HAP-1 (cell line): ENCODE measurements at regions of chr1 and their contacts with region 1.

Region 1: GRCh38 chr1:150168960-150169601 is 19.4 kb downstream of the PLEKHO1 start:
- DNase-seq: peak; percentile 51 to 82
- H3K4me3 ChIP-seq: no peak overlapping the region
- H3K4me1 ChIP-seq: peaks cover 2% of the 10 kb centered on the region; the same call in 1 of the 2 replicates
- H3K27me3 ChIP-seq: no peaks in the 10 kb centered on the region

Region 2: GRCh38 chr1:149886396-149887195 is 282.5 kb before region 1 on chr1:
- in situ Hi-C with region 1: no loop called
- DNase-seq: peak; percentile 89 to 98
- H3K4me3 ChIP-seq: peak overlapping the region; percentile 59
- H3K4me1 ChIP-seq: peaks cover 17% of the 10 kb centered on the region
- H3K27me3 ChIP-seq: no peaks in the 10 kb centered on the region

Region 3: DNA sequence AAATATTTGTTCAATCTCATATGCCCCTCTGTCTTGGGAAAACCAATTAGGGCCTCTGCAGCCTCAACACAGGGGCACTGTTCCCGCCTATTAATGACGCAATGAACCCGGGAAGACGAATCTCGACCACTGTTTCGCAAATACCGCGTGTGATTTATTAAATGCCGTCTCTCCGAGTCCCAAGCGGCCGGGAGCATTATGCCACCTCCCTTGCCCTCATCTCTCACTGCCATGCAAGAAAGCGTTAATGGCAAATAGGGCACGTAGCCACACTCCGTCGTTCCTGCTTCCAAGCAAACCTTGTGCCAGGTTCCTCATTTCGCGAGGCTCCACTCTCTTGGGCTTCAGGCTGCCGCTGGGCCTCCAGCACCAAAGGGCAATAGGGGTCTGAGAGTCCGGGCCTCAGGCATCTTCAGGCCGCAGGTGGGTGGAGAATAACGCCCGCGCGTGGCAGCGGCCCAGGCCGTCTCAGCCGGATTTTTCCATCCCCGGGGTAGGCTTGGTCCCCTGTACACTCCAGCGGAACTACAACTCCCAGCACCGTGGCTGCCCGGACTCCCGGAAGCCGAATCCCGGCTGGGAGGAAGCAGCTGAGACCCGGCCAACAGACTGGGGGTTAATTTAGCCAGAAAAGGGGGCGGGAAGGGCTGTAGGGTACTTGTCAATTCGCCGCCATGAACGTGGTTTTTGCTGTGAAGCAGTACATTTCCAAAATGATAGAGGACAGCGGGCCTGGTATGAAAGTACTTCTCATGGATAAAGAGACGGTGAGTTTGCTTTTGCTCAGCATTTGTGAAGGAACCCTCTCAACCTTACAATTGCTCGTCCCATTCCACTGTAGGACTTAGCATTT is 101.7 kb before region 1 on chr1 and contains the start of gene VPS45:
- in situ Hi-C with region 1: loop called (anchors 5 kb)
- DNase-seq: peak; percentile 88 to 94
- H3K4me3 ChIP-seq: peak within 1 kb of the TSS; percentile 53
- H3K4me1 ChIP-seq: peaks cover 13% of the 10 kb centered on the region
- H3K27me3 ChIP-seq: no peaks in the 10 kb centered on the region

Region 4: DNA sequence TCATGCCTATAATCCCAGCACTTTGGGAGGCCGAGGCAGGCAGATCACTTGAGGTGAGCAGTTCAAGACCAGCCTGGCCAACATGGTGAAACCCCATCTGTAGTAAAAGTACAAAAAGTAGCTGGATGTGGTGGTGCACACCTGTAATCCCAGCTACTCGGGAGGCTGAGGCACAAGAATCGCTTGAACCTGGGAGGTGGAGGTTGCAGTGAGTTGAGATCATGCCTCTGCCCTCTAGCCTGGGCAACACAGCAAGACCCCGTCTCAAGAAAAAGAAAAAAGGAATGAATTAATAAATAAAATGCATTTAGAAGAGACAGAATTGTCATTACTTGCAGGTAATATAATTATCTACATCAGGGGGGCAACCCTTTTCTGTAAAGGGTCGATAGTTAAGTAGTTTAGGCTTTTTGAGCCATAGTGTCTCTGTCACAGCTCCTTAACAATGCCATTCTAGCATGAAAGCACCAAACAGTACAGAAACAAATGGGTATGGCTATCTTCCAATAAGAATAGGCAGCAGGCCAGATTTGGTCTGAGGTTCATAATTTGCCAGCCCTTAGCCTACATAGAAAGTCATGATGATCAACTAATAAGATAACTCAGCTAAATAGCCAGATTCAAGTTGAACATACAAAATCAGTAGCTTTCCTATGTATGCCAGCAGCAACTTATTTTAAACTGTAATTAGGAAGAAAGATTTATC is 251.6 kb after region 1 on chr1:
- in situ Hi-C with region 1: no loop called
- DNase-seq: no peak
- H3K4me3 ChIP-seq: no peak overlapping the region
- H3K4me1 ChIP-seq: no peaks in the 10 kb centered on the region
- H3K27me3 ChIP-seq: no peaks in the 10 kb centered on the region